ENCODE measurements at regions of chr2 and their contacts with region 1.

Region 1: DNA sequence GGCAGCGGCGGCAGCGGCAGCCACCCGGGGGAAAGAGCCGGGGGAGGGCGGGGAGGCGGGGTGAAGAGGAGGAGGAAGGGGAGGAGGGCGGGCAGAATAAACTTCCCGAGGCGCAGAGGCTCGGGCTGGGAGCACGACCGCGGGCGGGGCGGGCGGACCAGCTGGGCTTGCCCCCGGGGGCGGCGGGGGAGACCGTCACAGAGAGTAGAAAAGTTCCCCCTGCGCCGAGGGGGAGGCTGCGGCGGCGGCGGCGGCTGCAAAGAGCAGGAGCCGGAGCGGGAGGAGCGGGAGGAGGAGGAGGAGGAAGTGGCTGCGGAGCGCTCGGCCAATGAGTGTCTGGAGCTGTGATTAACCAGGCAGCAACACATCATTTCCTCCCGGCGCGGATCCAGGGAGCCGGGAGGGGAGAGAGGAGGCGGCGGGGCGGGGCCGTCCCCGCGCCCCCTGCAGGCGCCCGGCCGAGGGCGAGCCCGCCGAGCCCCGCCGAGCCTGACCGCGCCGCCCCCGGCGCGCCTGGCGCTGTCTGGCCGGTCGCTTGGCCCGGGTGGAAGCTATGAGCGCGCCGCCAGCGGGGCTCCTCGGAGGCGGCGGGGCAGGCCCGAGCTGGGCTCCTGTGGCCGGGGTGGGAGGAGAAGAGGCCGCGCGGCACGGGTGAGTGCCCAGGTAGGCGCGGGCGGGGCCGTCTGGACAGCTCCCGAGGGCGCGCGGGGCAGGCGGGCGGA is at the start of gene ACVR1:
- DNase-seq: peak; percentile 78 to 95
- ATAC-seq: peak; percentile 93 to 94
- H3K4me3 ChIP-seq: peak within 1 kb of the TSS; percentile 98
- H3K27ac ChIP-seq: peak within 1 kb of the TSS; percentile 97 to 98
- H3K4me1 ChIP-seq: peaks cover 35% of the 10 kb centered on the region
- CTCF ChIP-seq: peak; percentile 52
- EP300 ChIP-seq: no peak
- POLR2A ChIP-seq: no peak; the same call in 1 of the 2 replicates
- RAD21 ChIP-seq: peak in 1 of 2 experiments; percentile 30; a peak in 2 of 5 replicates
- polyA plus RNA-seq, gene ACVR1: 21.6 and 33.6 TPM in 2 replicates

Region 2: DNA sequence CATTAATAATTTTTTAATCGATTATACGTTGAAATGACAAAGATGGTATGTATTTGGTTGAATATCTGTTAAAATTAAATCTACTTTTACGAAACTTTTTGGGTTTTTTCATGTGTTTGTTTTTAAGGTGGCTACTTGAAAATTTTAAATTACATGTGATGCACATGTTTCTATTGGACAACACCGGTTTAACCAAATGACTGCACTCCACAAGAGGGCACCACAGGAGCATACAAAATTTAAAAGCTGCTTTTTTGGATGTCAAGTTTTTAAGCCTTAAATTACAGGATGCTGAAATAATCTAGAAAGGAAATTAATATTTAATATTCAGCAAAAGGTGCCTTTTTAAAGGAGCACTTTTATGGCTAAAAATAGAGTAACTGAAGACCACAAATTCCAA is 98.8 kb before region 1 on chr2:
- CTCF ChIA-PET with region 1: interaction called, 10 read pairs
- POLR2A ChIA-PET with region 1: no interaction called
- DNase-seq: peak; percentile 24 to 56
- ATAC-seq: peak in 1 of 2 experiments; percentile 60; a peak in 3 of 6 replicates
- H3K4me3 ChIP-seq: no peak overlapping the region
- H3K27ac ChIP-seq: no peak overlapping the region
- H3K4me1 ChIP-seq: peaks cover 3% of the 10 kb centered on the region; the same call in 1 of the 3 replicates
- CTCF ChIP-seq: peak; percentile 85
- EP300 ChIP-seq: no peak
- POLR2A ChIP-seq: no peak
- RAD21 ChIP-seq: peak; percentile 88 to 91

Region 3: DNA sequence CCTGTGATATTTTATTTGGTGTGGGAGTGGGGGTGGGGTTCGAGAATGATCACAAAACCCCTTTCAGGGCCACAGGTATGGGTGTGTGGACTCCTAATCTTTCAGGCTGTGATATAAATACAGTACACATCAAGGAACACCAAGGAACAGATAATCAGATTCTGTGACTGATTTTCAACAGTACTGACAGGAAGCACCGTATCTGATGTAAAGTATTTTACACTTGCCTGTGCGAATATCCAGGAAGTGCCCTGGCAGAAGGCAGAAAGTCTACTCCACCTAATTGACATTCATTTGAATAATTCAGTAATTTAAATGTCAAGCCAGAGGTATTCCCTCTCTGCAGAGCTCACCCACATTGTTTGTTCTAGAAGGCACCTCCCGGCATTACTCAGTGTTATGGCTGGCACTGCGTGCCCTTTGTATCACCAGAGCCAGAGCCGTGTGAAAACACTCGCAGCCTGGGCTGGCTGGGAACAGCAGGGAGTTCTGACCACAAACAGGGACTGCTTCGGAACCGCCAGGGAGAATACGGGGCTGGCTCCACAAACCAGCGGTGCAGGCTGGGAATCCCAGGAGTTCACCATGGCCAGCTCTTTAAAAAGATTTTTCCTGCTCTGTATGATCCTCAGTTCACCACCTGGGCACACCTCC is 91.9 kb before region 1 on chr2:
- CTCF ChIA-PET with region 1: interaction called, 10 read pairs
- POLR2A ChIA-PET with region 1: interaction called, 17 read pairs
- DNase-seq: peak; percentile 28 to 41
- ATAC-seq: peak; percentile 84 to 93
- H3K4me3 ChIP-seq: peak overlapping the region; percentile 29
- H3K27ac ChIP-seq: peak overlapping the region; percentile 67 to 80
- H3K4me1 ChIP-seq: peaks cover 56% of the 10 kb centered on the region
- CTCF ChIP-seq: no peak
- EP300 ChIP-seq: no peak
- POLR2A ChIP-seq: no peak
- RAD21 ChIP-seq: no peak

Region 4: GRCh38 chr2:157857881-157858280 is 18.3 kb before region 1 on chr2:
- CTCF ChIA-PET with region 1: interaction called, 20 read pairs
- POLR2A ChIA-PET with region 1: interaction called, 5 read pairs
- DNase-seq: peak in 1 of 2 experiments; percentile 68
- ATAC-seq: peak; percentile 88 to 89
- H3K4me3 ChIP-seq: no peak overlapping the region
- H3K27ac ChIP-seq: peak overlapping the region; percentile 55 to 75
- H3K4me1 ChIP-seq: peaks cover 43% of the 10 kb centered on the region
- CTCF ChIP-seq: no peak
- EP300 ChIP-seq: no peak
- POLR2A ChIP-seq: no peak
- RAD21 ChIP-seq: no peak

Region 5: GRCh38 chr2:157866202-157866601 is 10.0 kb before region 1 on chr2:
- CTCF ChIA-PET with region 1: interaction called, 7 read pairs
- POLR2A ChIA-PET with region 1: interaction called, 11 read pairs
- DNase-seq: no peak
- ATAC-seq: no peak
- H3K4me3 ChIP-seq: no peak overlapping the region
- H3K27ac ChIP-seq: peak overlapping the region in 1 of 2 experiments; percentile 31; a peak in 1 of 6 replicates
- H3K4me1 ChIP-seq: peaks cover 30% of the 10 kb centered on the region
- CTCF ChIP-seq: no peak
- EP300 ChIP-seq: no peak
- POLR2A ChIP-seq: no peak
- RAD21 ChIP-seq: no peak

Region 6: DNA sequence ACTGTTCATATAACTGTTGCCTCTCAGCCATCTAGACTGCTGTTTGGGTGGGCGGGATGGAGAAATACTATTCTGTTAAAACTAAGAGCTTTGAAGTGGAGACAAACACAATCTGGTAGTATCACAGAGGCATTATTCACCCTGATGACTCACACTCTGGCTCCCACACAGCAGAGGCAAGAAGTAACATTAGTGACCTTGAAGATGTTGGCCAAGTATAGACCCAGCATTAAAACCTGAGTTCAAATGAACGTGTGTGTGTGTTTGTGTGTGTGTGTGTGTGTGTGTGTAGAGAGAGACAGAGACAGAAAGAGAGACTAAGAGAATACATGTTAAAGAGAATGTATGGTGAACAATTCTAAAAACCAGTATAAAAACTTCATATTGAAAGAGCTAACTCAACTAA is 22.4 kb after region 1 on chr2:
- CTCF ChIA-PET with region 1: interaction called, 11 read pairs
- POLR2A ChIA-PET with region 1: interaction called, 5 read pairs
- DNase-seq: peak in 1 of 2 experiments; percentile 58
- ATAC-seq: peak; percentile 83 to 88
- H3K4me3 ChIP-seq: no peak overlapping the region
- H3K27ac ChIP-seq: peak overlapping the region; percentile 8 to 51; a peak in 3 of 6 replicates
- H3K4me1 ChIP-seq: peaks cover 16% of the 10 kb centered on the region
- CTCF ChIP-seq: no peak
- EP300 ChIP-seq: no peak
- POLR2A ChIP-seq: no peak
- RAD21 ChIP-seq: no peak

Region 7: GRCh38 chr2:157922336-157922735 is 46.1 kb after region 1 on chr2:
- CTCF ChIA-PET with region 1: no interaction called
- POLR2A ChIA-PET with region 1: no interaction called
- DNase-seq: no peak
- ATAC-seq: no peak
- H3K4me3 ChIP-seq: no peak overlapping the region
- H3K27ac ChIP-seq: no peak overlapping the region
- H3K4me1 ChIP-seq: no peaks in the 10 kb centered on the region
- CTCF ChIP-seq: no peak
- EP300 ChIP-seq: no peak
- POLR2A ChIP-seq: no peak
- RAD21 ChIP-seq: no peak

Measured in A549 (cell line).